Panc1 (cell line): ENCODE measurements at regions of chr20 and their contacts with region 1.

Region 1: DNA sequence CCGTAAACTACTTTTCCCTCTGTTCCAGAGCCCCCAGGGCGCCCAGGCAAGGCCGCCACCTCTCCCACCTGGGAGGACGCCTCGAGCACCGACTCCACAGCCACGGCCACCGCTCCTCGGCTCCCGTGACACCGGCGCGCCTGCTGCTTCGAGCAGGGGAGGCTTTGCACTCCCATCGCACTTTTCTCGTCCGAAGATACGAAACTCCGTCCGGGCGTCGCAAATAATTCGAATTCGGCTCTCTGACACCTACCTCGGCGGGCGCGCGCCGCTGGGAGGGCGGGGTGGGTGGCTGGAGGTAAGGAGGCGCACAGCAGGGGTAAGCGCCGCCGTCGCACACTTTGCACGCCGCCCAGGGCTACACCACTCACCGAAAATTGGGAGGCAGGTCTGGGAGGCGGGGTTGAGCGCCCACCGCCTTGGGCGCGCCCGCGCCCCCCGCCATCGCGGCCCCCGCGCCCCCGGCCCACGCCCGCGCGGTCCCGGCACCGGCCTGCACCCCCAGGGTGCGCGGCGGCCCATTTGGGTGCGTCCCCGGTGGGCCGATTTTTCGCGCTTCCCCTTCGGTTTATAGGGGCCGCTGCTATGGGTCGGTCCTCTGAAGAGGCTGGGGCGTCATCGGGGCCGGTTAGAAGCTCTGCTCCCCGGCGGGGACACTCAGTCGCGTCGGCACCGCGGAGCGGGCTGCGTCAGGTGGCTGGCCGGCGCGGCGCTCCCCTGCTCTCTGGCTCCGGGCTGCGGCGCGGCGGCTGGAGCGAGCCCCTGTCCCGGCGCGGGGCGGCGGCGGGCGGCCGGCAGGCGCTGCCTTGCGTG is 36.2 kb downstream of the GNAS start:
- DNase-seq: no peak
- ATAC-seq: no peak
- H3K4me3 ChIP-seq: peak overlapping the region in 1 of 2 experiments; percentile 77; a peak in 1 of 4 replicates
- H3K27ac ChIP-seq: no peak overlapping the region
- H3K4me1 ChIP-seq: peaks cover 6% of the 10 kb centered on the region
- H3K27me3 ChIP-seq: no peaks in the 10 kb centered on the region
- CTCF ChIP-seq: no peak

Region 2: DNA sequence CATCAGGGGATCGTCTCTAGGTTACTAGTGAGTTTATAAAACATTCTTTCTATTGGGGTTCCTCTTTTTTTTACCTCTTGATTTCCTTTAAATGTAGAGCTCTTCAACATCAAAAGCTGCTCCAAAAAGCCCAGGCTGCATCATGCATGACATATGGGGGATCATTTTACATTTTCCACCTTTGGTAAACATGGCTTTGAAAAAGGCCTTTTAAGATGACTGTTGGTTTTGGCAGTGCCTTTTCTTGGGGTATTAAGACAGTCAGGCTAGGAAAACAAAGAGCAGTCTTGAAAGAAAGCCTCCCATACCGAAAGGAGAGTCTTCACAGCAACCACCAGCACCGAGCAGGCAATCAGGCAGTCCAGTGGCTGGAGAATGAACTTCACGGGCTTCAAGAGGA is 122.9 kb before region 1 on chr20:
- CTCF ChIA-PET with region 1: no interaction called
- POLR2A ChIA-PET with region 1: no interaction called
- in situ Hi-C with region 1: no loop called
- intact Hi-C with region 1: no loop called
- DNase-seq: no peak
- ATAC-seq: no peak
- H3K4me3 ChIP-seq: no peak overlapping the region
- H3K27ac ChIP-seq: no peak overlapping the region
- H3K4me1 ChIP-seq: no peaks in the 10 kb centered on the region
- H3K27me3 ChIP-seq: peaks cover 37% of the 10 kb centered on the region
- CTCF ChIP-seq: no peak

Region 3: DNA sequence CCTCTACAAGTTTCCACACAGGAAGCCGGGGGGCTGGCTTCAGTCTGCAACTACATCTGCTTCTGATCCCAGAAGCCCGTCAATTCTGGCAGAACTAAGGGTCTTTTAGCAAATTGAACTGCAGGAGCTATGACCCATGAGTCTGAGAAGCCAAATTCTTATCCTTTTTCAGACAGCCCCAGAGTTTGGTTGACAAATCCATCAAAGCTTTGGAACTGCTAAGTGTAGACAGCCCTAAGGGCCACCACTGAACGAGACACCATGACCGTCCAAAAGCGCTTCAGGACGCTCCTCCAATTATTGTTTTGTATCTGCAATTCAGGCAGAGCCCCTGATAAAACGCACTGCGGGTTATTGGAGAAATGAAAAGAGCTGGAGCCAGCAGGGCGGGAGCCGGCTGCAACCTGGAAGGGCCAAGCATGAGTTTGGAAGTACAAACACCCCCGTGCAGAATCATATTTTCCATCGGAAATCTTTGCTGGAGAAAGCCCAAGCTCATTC is 105.2 kb before region 1 on chr20:
- CTCF ChIA-PET with region 1: no interaction called
- POLR2A ChIA-PET with region 1: no interaction called
- in situ Hi-C with region 1: no loop called
- intact Hi-C with region 1: no loop called
- DNase-seq: no peak
- ATAC-seq: no peak
- H3K4me3 ChIP-seq: no peak overlapping the region
- H3K27ac ChIP-seq: no peak overlapping the region
- H3K4me1 ChIP-seq: no peaks in the 10 kb centered on the region
- H3K27me3 ChIP-seq: peaks cover 30% of the 10 kb centered on the region
- CTCF ChIP-seq: no peak

Region 4: GRCh38 chr20:58877050-58877975 is 11.4 kb before region 1 on chr20:
- CTCF ChIA-PET with region 1: interaction called, 3 read pairs
- POLR2A ChIA-PET with region 1: interaction called, 12 read pairs
- in situ Hi-C with region 1: no loop called
- intact Hi-C with region 1: no loop called
- DNase-seq: no peak
- ATAC-seq: no peak
- H3K4me3 ChIP-seq: no peak overlapping the region
- H3K27ac ChIP-seq: no peak overlapping the region
- H3K4me1 ChIP-seq: no peaks in the 10 kb centered on the region
- H3K27me3 ChIP-seq: no peaks in the 10 kb centered on the region
- CTCF ChIP-seq: no peak

Region 5: DNA sequence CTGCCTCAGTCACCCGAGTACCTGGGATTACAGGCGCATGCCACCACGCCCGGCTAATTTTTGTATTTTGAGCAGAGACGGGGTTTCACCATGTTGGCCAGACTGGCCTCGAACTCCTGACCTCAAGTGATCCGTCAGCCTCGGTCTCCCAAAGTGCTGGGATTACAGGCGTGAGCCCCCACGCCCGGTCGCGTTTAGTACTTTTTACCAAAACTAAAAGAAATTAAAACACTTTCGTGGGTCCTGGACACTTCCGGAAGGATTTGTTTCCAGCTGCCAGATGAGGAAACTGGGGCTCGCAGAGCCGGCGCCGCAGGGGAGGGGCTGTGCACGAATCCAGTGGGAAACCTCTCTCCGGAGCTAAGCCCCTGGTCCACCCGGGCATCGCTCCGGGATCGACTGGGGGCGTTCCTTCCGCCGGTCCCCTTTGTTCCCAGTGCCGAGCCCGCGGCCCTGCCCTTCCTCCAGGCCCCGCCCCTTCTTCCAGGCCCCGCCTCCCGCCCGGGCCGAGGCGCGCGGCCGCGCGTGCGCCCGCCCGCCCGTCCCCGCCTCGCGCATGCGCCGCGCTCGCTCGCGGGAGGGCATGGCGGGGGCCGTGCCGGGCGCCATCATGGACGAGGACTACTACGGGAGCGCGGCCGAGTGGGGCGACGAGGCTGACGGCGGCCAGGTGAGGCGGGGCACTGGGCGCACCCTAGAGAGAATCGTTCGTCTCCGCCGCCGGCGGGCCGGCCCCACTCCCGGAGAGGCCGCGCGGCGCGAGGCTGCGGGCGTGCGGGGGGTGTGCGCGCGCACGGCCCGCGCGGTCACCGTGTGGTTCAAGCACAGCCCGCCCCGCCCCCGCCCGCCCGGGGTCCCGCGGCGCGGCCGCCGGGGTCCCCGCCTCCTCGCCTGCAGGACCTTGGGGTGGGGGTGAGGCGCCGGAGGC is 92.2 kb after region 1 on chr20 and contains the start of gene NELFCD:
- CTCF ChIA-PET with region 1: no interaction called
- POLR2A ChIA-PET with region 1: no interaction called
- in situ Hi-C with region 1: no loop called
- intact Hi-C with region 1: loop called (anchors 10 kb)
- DNase-seq: peak; percentile 17
- ATAC-seq: peak; percentile 97
- H3K4me3 ChIP-seq: peak within 1 kb of the TSS; percentile 88 to 96
- H3K27ac ChIP-seq: peak within 1 kb of the TSS; percentile 91
- H3K4me1 ChIP-seq: peaks cover 10% of the 10 kb centered on the region; the same call in 1 of the 2 replicates
- H3K27me3 ChIP-seq: no peaks in the 10 kb centered on the region
- CTCF ChIP-seq: no peak
- total RNA-seq, gene NELFCD: 108 TPM

Region 6: GRCh38 chr20:58995461-58996225 is 106.9 kb after region 1 on chr20:
- CTCF ChIA-PET with region 1: no interaction called
- POLR2A ChIA-PET with region 1: no interaction called
- in situ Hi-C with region 1: no loop called
- intact Hi-C with region 1: no loop called
- DNase-seq: no peak
- ATAC-seq: no peak
- H3K4me3 ChIP-seq: no peak overlapping the region
- H3K27ac ChIP-seq: no peak overlapping the region
- H3K4me1 ChIP-seq: no peaks in the 10 kb centered on the region
- H3K27me3 ChIP-seq: no peaks in the 10 kb centered on the region
- CTCF ChIP-seq: no peak